Ascending aorta (tissue), 2 donors: ENCODE measurements at regions of chr3 and their contacts with region 1.

Region 1: DNA sequence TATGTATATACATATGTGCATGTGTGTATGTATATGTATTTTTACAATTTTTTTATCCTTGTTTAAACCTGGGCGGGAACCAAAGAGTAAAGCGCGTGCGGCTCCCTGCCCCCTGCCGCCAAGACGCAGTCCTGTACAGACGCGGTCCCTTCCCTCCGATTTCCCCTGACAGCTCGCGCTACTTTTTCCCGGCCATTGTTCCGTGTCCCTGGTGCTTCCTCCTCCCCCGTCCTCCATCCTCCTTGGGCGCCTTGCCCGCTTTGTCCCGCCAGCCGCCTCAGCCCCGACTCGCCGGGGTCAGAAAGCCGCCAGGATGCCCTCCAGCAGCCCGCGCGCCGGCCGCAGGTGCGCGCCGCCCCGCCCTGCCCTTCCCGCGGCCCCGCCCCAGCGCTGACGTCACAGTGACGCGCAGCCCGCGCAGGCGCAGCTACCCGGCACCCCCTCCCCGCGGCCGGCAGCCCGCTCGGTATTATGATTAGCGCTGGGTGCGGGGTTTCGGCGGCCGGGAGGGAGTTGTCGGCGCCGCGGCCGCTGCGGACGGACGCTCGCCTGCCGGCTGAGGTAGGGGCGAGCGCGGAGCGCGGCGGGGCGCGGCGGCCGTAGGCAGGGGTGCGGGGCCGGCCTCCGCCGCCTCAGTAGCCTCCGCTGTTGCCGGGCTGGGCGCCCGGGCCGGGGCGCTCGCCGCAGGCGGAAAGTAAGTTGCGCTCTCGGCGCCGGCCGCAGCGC is at the start of gene SNRK:
- DNase-seq: peak; percentile 20 to 91
- H3K4me3 ChIP-seq: peak within 1 kb of the TSS; percentile 79 to 86
- H3K27ac ChIP-seq: peak within 1 kb of the TSS; percentile 58 to 84
- H3K4me1 ChIP-seq: peaks cover 0 to 12% of the 10 kb centered on the region in 2 donors
- H3K27me3 ChIP-seq: no peaks in the 10 kb centered on the region
- CTCF ChIP-seq: peak in 2 of 3 experiments; percentile 8 to 31
- total RNA-seq, gene SNRK: 44.3 TPM

Region 2: DNA sequence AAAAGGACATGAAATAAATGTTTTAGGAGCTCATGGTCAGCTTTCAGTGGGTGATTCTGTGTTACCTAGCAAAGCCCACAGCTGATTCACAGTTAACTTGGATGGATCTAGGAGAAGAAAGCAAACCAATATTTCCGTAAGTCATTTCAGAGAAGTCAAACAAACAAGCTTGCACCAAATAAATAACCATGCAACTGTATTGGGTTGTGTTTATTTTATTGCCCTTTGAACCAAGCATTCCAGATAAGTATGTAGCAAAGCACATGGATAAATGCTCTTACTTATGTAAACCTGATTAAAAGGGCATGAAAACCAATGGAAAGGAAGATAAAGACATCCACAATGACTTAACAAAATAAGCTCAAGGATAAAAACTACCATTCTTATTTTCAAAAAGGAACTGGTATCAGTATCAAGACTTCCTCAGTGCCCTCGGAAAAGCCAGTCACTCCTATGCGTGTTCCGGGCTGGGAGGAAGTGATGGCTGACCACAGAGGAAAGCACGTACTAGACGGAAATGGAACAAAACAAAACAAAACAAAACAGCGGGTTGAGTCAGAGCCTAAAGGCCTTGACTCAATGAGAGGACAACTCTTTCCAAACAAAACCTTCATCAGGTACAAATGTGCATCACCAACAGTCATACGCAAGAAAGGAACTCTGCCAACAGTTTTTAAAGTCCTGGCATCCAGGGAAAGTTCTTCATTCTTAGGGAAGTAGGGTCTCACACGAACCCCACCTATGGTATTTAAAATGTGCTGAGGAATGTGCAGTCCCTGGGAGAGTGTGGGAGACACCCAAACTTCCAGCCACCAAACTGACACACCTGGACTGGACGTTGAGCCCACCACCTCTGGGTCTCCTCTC is 103.3 kb after region 1 on chr3:
- intact Hi-C with region 1: loop called (anchors 5 kb)
- DNase-seq: peak; percentile 61 to 81
- H3K4me3 ChIP-seq: no peak overlapping the region
- H3K27ac ChIP-seq: peak overlapping the region; percentile 57 to 60
- H3K4me1 ChIP-seq: no peaks in the 10 kb centered on the region
- H3K27me3 ChIP-seq: no peaks in the 10 kb centered on the region
- CTCF ChIP-seq: no peak